CD4-positive, alpha-beta memory T cell (primary cell): ENCODE measurements at regions of chr17 and their contacts with region 1.

Region 1: DNA sequence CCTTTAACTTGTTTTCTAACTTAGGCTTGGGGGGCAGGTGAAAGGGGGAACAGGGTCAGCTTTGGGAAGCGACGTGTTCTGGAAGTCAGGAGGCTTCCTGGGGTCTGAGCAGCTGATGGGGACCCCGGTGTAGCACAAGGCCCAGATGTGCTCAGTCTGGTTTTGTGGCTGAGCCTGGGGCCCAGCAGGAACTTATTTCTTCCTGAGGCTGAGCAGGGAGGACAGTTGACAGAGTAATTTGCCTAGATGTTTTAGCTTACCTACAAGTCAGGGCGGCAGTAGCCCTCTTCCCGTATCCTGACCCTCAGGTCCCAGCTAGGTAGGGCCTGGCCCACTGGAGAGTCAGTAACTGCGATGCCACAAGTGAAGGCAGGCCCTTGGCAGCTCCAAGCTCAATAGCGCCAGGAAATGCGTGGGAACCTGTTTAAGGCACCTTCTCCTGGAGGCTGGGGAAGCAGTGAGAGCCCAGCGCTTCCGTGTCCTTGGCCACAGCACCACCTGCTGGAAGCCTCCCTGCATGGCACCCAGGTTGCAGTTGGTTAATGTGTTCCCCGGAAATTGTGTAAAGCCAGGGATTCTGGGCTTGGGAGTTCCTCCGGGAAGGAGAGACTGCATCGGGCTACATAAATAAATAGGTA is 5.2 kb downstream of the CCR7 start:
- DNase-seq: peak; percentile 77 to 84 (median 81)
- H3K4me3 ChIP-seq: peak overlapping the region; percentile 94 to 96
- H3K4me3 Mint-ChIP-seq: peak overlapping the region; percentile 88 to 98 (median 96)
- H3K27ac ChIP-seq: peak overlapping the region; percentile 94
- H3K27ac Mint-ChIP-seq: peak overlapping the region; percentile 95 to 100 (median 99)
- H3K4me1 ChIP-seq: peaks cover 82% of the 10 kb centered on the region
- H3K4me1 Mint-ChIP-seq: peaks cover 42 to 99% (median 72%) of the 10 kb centered on the region in 4 donors
- H3K27me3 ChIP-seq: no peaks in the 10 kb centered on the region
- H3K27me3 Mint-ChIP-seq: no peaks in the 10 kb centered on the region

Region 2: GRCh38 chr17:40399185-40399584 is 160.9 kb before region 1 on chr17:
- CTCF ChIA-PET with region 1: interaction called, 43 read pairs
- POLR2A ChIA-PET with region 1: interaction called, 7 read pairs
- intact Hi-C with region 1: loop called (anchors 1 kb)
- DNase-seq: peak in 4 of 5 donors; percentile 40 to 66 (median 57)
- H3K4me3 ChIP-seq: no peak overlapping the region
- H3K4me3 Mint-ChIP-seq: no peak overlapping the region
- H3K27ac ChIP-seq: no peak overlapping the region
- H3K27ac Mint-ChIP-seq: peak overlapping the region in 2 of 7 donors; percentile 82 to 84
- H3K4me1 ChIP-seq: peaks cover 21% of the 10 kb centered on the region
- H3K4me1 Mint-ChIP-seq: peaks cover 16 to 24% (median 21%) of the 10 kb centered on the region in 4 donors
- H3K27me3 ChIP-seq: no peaks in the 10 kb centered on the region
- H3K27me3 Mint-ChIP-seq: no peaks in the 10 kb centered on the region

Region 3: DNA sequence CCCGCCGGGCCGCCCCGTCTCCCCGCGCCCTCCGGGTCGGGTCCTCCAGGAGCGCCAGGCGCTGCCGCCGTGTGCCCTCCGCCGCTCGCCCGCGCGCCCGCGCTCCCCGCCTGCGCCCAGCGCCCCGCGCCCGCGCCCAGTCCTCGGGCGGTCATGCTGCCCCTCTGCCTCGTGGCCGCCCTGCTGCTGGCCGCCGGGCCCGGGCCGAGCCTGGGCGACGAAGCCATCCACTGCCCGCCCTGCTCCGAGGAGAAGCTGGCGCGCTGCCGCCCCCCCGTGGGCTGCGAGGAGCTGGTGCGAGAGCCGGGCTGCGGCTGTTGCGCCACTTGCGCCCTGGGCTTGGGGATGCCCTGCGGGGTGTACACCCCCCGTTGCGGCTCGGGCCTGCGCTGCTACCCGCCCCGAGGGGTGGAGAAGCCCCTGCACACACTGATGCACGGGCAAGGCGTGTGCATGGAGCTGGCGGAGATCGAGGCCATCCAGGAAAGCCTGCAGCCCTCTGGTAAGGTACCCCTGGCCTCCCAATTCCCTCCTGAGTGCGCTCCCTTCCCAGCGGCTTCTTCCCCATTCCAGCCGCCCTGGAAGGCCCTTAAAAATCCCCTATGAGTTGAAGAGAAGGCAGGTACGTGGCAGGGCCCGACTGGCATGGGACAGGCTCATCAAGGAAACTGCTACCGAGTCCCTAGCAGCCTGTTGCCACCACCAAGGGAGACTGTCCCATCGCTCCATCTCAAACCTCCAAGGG is 116.3 kb before region 1 on chr17:
- CTCF ChIA-PET with region 1: interaction called, 32 read pairs
- POLR2A ChIA-PET with region 1: interaction called, 15 read pairs
- intact Hi-C with region 1: loop called (anchors 1 kb)
- DNase-seq: peak; percentile 55 to 69 (median 62)
- H3K4me3 ChIP-seq: peak overlapping the region; percentile 67 to 73
- H3K4me3 Mint-ChIP-seq: peak overlapping the region; percentile 80 to 97 (median 86)
- H3K27ac ChIP-seq: peak overlapping the region; percentile 37
- H3K27ac Mint-ChIP-seq: peak overlapping the region; percentile 85 to 97 (median 93)
- H3K4me1 ChIP-seq: peaks cover 48% of the 10 kb centered on the region
- H3K4me1 Mint-ChIP-seq: peaks cover 23 to 51% (median 35%) of the 10 kb centered on the region in 4 donors
- H3K27me3 ChIP-seq: no peaks in the 10 kb centered on the region
- H3K27me3 Mint-ChIP-seq: peaks cover 2 to 6% of the 10 kb centered on the region in 2 donors

Region 4: GRCh38 chr17:40480501-40481003 is 79.5 kb before region 1 on chr17:
- CTCF ChIA-PET with region 1: interaction called, 24 read pairs
- POLR2A ChIA-PET with region 1: interaction called, 44 read pairs
- intact Hi-C with region 1: loop called (anchors 1 kb)
- DNase-seq: peak; percentile 92 to 96 (median 95)
- H3K4me3 ChIP-seq: peak overlapping the region in 1 of 2 donors; percentile 26
- H3K4me3 Mint-ChIP-seq: peak overlapping the region; percentile 49 to 78 (median 73)
- H3K27ac ChIP-seq: peak overlapping the region; percentile 83
- H3K27ac Mint-ChIP-seq: peak overlapping the region; percentile 97 to 100 (median 99)
- H3K4me1 ChIP-seq: peaks cover 91% of the 10 kb centered on the region
- H3K4me1 Mint-ChIP-seq: peaks cover 31 to 83% (median 55%) of the 10 kb centered on the region in 4 donors
- H3K27me3 ChIP-seq: no peaks in the 10 kb centered on the region
- H3K27me3 Mint-ChIP-seq: no peaks in the 10 kb centered on the region

Region 5: DNA sequence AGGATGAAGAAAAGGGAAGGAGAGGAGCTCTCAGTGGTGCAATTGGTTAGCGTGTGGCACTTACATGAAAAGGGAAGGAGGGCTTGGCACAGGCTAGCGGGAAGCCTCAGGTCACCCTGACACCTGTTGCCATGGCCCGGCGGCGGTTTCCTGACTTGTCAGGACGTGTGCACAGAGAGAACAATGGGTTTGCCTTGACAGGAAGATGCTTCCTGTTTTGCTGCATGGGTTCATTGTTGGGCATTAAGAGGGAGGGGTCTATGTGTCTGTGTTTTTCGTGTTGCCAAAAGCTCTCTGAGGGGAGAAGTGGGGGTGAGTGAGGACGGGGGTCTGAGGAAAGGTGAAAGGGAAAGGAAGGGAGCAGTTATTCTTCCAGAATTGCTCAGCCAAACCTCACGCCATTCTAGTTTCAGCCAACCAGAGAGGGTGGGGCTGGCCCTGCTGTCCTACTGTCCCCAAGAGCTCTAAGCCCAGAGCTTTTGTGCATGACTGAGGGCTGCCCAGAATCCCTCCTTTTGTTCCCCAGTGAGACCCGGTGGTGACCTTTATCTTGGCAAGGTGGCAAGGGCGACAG is 22.3 kb after region 1 on chr17:
- CTCF ChIA-PET with region 1: interaction called, 27 read pairs
- POLR2A ChIA-PET with region 1: interaction called, 166 read pairs
- intact Hi-C with region 1: loop called (anchors 1 kb)
- DNase-seq: peak; percentile 74 to 78 (median 76)
- H3K4me3 ChIP-seq: peak overlapping the region; percentile 28 to 34
- H3K4me3 Mint-ChIP-seq: peak overlapping the region; percentile 32 to 84 (median 80)
- H3K27ac ChIP-seq: peak overlapping the region; percentile 47
- H3K27ac Mint-ChIP-seq: peak overlapping the region; percentile 75 to 96 (median 95)
- H3K4me1 ChIP-seq: peaks cover 72% of the 10 kb centered on the region
- H3K4me1 Mint-ChIP-seq: peaks cover 57 to 95% (median 78%) of the 10 kb centered on the region in 4 donors
- H3K27me3 ChIP-seq: no peaks in the 10 kb centered on the region
- H3K27me3 Mint-ChIP-seq: no peaks in the 10 kb centered on the region

Region 6: GRCh38 chr17:40615295-40615988 is 55.4 kb after region 1 on chr17:
- CTCF ChIA-PET with region 1: interaction called, 435 read pairs
- POLR2A ChIA-PET with region 1: interaction called, 1,226 read pairs
- intact Hi-C with region 1: loop called (anchors 1 kb)
- DNase-seq: peak in 4 of 5 donors; percentile 53 to 70 (median 56)
- H3K4me3 ChIP-seq: no peak overlapping the region
- H3K4me3 Mint-ChIP-seq: peak overlapping the region; percentile 41 to 83 (median 70)
- H3K27ac ChIP-seq: peak overlapping the region; percentile 66
- H3K27ac Mint-ChIP-seq: peak overlapping the region; percentile 86 to 97 (median 96)
- H3K4me1 ChIP-seq: peaks cover 76% of the 10 kb centered on the region
- H3K4me1 Mint-ChIP-seq: peaks cover 45 to 76% (median 66%) of the 10 kb centered on the region in 4 donors
- H3K27me3 ChIP-seq: no peaks in the 10 kb centered on the region
- H3K27me3 Mint-ChIP-seq: no peaks in the 10 kb centered on the region

Region 7: GRCh38 chr17:40810505-40810904 is 250.4 kb after region 1 on chr17:
- CTCF ChIA-PET with region 1: no interaction called
- POLR2A ChIA-PET with region 1: no interaction called
- intact Hi-C with region 1: no loop called
- DNase-seq: no peak
- H3K4me3 ChIP-seq: no peak overlapping the region
- H3K4me3 Mint-ChIP-seq: no peak overlapping the region
- H3K27ac ChIP-seq: no peak overlapping the region
- H3K27ac Mint-ChIP-seq: no peak overlapping the region
- H3K4me1 ChIP-seq: no peaks in the 10 kb centered on the region
- H3K4me1 Mint-ChIP-seq: no peaks in the 10 kb centered on the region
- H3K27me3 ChIP-seq: peaks cover 30% of the 10 kb centered on the region
- H3K27me3 Mint-ChIP-seq: peaks cover 52 to 55% of the 10 kb centered on the region in 2 donors

Region 8: DNA sequence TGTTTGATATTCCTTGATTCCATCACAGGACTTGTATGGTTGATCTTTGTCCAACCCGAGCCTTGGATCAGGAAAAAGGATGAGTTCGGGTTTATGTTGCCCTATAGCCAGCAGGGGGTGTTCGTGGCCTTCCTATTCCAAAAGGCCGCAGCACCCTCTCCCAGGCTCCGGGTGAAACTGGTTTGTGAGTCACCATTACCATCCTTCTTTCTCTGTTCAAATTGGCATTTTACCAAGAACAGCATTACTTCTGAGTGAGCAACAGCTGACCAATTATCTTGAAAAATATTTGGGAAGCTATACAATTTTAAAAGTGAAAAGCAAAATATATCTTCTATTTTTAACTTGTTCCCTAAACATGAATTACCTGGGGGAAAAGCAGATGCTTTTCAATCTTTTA is 349.3 kb after region 1 on chr17:
- CTCF ChIA-PET with region 1: no interaction called
- POLR2A ChIA-PET with region 1: no interaction called
- intact Hi-C with region 1: no loop called
- DNase-seq: peak; percentile 48 to 69 (median 60)
- H3K4me3 ChIP-seq: no peak overlapping the region
- H3K4me3 Mint-ChIP-seq: no peak overlapping the region
- H3K27ac ChIP-seq: no peak overlapping the region
- H3K27ac Mint-ChIP-seq: no peak overlapping the region
- H3K4me1 ChIP-seq: no peaks in the 10 kb centered on the region
- H3K4me1 Mint-ChIP-seq: no peaks in the 10 kb centered on the region
- H3K27me3 ChIP-seq: no peaks in the 10 kb centered on the region
- H3K27me3 Mint-ChIP-seq: peaks cover 23 to 39% of the 10 kb centered on the region in 2 donors